RWPE1 (cell line): ENCODE measurements at regions of chr11 and their contacts with region 1.

Region 1: GRCh38 chr11:8206251-8207079 is 37.6 kb upstream of the RIC3 start:
- DNase-seq: no peak
- H3K27ac ChIP-seq: no peak overlapping the region
- CTCF ChIP-seq: no peak

Region 2: GRCh38 chr11:8219257-8220021 is 13.0 kb after region 1 on chr11:
- CTCF ChIA-PET with region 1: interaction called, 16 read pairs
- POLR2A ChIA-PET with region 1: no interaction called
- DNase-seq: peak; percentile 50
- H3K27ac ChIP-seq: no peak overlapping the region
- CTCF ChIP-seq: peak; percentile 73

Region 3: GRCh38 chr11:8382436-8383053 is 176.1 kb after region 1 on chr11:
- CTCF ChIA-PET with region 1: no interaction called
- POLR2A ChIA-PET with region 1: no interaction called
- DNase-seq: peak; percentile 68
- H3K27ac ChIP-seq: no peak overlapping the region
- CTCF ChIP-seq: no peak